ENCODE measurements at regions of chr1 and their contacts with region 1.

Region 1: DNA sequence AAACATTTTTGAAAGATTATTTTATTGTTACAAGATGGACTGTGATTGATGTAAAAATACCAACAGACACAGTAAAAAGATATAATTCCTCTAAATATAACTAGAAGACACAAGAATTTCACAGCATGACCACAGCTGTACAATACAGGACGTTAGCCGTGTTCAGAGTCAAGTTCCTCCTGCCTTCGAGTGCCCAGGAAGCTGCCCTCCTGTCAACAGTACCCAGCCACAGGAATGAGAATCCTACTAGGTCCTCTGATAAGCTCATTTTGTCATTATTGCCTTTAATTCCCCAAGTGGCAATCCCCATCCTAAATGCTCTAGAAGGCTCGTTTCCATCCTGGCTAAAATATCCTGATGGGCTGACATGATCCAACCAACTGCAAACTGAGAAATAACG is 16.4 kb upstream of the CAPN2 start:
- DNase-seq: no peak
- H3K4me3 ChIP-seq: no peak overlapping the region
- CTCF ChIP-seq: no peak

Region 2: GRCh38 chr1:223609977-223610376 is 86.0 kb before region 1 on chr1:
- CTCF ChIA-PET with region 1: no interaction called
- POLR2A ChIA-PET with region 1: no interaction called
- DNase-seq: no peak
- H3K4me3 ChIP-seq: no peak overlapping the region
- CTCF ChIP-seq: no peak

Region 3: GRCh38 chr1:223683586-223684487 is 12.1 kb before region 1 on chr1:
- CTCF ChIA-PET with region 1: interaction called, 20 read pairs
- POLR2A ChIA-PET with region 1: interaction called, 3 read pairs
- DNase-seq: no peak
- H3K4me3 ChIP-seq: no peak overlapping the region
- CTCF ChIP-seq: peak; percentile 63